ENCODE measurements at regions of chr1 and their contacts with region 1.

Region 1: DNA sequence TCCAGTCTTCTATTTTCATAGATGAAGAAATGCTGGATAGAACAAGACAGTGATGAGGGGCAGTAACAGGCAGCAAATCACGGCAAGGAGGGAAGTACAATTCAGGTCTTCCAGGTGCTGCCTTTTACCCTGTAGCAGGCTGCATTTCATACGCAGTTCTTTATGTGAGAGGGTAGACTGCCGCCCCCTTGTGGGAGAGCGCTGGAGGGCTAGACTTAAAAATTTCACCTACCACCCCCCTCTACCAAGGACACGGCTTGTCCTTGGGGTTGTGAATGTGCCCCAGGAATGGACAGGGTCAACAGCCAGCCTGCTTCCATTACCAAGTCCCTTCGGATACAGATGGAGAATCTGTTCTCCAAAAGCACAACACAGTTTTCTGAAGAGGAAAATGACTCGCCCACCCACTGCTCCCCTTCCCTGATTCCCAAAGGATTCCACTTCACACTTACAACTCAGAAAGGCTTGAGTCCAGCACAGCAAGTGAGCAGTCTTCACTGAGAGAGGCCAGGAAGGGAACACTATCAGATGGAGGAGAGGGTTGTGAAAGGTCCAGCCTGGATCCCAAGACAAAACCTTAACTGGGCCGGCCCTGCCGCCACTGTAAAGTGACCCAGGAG is 7.4 kb downstream of the WDR77 start:
- DNase-seq: peak; percentile 62 to 72 (median 64)
- H3K4me3 ChIP-seq: no peak overlapping the region
- H3K4me3 Mint-ChIP-seq: no peak overlapping the region
- H3K27ac ChIP-seq: peak overlapping the region; percentile 12
- H3K27ac Mint-ChIP-seq: peak overlapping the region; percentile 68 to 82 (median 77)
- H3K4me1 ChIP-seq: peaks cover 26% of the 10 kb centered on the region
- H3K4me1 Mint-ChIP-seq: peaks cover 16 to 44% (median 27%) of the 10 kb centered on the region in 4 donors
- H3K27me3 ChIP-seq: no peaks in the 10 kb centered on the region
- H3K27me3 Mint-ChIP-seq: no peaks in the 10 kb centered on the region

Region 2: GRCh38 chr1:111139956-111140679 is 301.6 kb before region 1 on chr1 and contains the starts of genes CEPT1 and DRAM2:
- CTCF ChIA-PET with region 1: no interaction called
- POLR2A ChIA-PET with region 1: no interaction called
- intact Hi-C with region 1: no loop called
- DNase-seq: peak; percentile 89 to 95 (median 91)
- H3K4me3 ChIP-seq: peak within 1 kb of the TSS; percentile 57 to 97
- H3K4me3 Mint-ChIP-seq: peak within 1 kb of the TSS; percentile 98 to 100 (median 100)
- H3K27ac ChIP-seq: peak within 1 kb of the TSS; percentile 79
- H3K27ac Mint-ChIP-seq: peak within 1 kb of the TSS; percentile 84 to 100 (median 99)
- H3K4me1 ChIP-seq: peaks cover 54% of the 10 kb centered on the region
- H3K4me1 Mint-ChIP-seq: peaks cover 32 to 54% (median 41%) of the 10 kb centered on the region in 4 donors
- H3K27me3 ChIP-seq: no peaks in the 10 kb centered on the region
- H3K27me3 Mint-ChIP-seq: no peaks in the 10 kb centered on the region
- total RNA-seq, gene CEPT1: 49.1 to 49.6 TPM
- total RNA-seq, gene DRAM2: 37.5 to 38.8 TPM

Region 3: GRCh38 chr1:111334169-111334568 is 107.5 kb before region 1 on chr1:
- CTCF ChIA-PET with region 1: no interaction called
- POLR2A ChIA-PET with region 1: no interaction called
- intact Hi-C with region 1: loop called (anchors 1 kb)
- DNase-seq: peak; percentile 49 to 69 (median 68)
- H3K4me3 ChIP-seq: no peak overlapping the region
- H3K4me3 Mint-ChIP-seq: peak overlapping the region in 2 of 8 donors; percentile 24 to 45
- H3K27ac ChIP-seq: no peak overlapping the region
- H3K27ac Mint-ChIP-seq: peak overlapping the region in 3 of 7 donors; percentile 1 to 74 (median 3)
- H3K4me1 ChIP-seq: peaks cover 7% of the 10 kb centered on the region
- H3K4me1 Mint-ChIP-seq: peaks cover 2 to 12% (median 4%) of the 10 kb centered on the region in 4 donors
- H3K27me3 ChIP-seq: no peaks in the 10 kb centered on the region
- H3K27me3 Mint-ChIP-seq: no peaks in the 10 kb centered on the region

Region 4: DNA sequence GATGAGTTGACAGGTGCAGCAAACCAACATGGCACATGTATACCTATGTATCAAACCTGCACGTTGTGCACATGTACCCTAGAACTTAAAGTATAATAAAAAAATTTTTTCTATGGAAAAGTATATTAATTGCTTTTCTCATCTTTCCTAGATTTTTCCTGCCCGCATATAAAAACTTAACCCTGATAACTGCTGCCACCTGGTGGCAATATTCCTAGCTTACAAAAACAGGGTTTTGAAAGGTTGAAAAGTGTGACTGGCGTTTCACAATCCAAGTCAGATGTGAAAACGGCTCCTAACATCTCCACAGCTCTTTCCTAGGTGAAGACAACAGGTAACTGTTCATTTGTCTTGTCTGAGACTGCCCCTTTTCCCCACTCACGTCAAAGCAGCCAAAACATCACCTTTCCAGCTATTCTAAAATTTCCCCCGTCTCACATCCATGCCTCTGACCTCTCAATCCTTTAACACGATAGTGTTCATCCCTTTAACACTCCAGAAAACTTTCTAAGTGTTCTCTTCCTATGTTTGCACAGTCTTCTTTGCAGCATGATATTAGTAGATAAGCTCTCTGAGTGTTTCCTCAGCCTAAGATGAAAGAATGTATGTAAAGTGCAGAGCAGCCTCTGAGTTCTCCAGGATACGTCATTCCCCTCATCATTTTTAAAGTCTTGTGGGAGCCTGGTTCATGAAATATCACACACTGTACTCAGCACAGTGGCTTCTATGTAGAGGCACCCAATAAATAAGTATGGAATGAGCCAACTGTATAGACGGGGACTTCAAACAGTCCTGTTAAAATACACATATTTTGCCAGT is 41.7 kb before region 1 on chr1:
- CTCF ChIA-PET with region 1: interaction called, 21 read pairs
- POLR2A ChIA-PET with region 1: no interaction called
- intact Hi-C with region 1: no loop called
- DNase-seq: peak in 4 of 5 donors; percentile 27 to 39 (median 33)
- H3K4me3 ChIP-seq: no peak overlapping the region
- H3K4me3 Mint-ChIP-seq: peak overlapping the region in 1 of 8 donors; percentile 18
- H3K27ac ChIP-seq: no peak overlapping the region
- H3K27ac Mint-ChIP-seq: peak overlapping the region in 4 of 7 donors; percentile 18 to 55 (median 34)
- H3K4me1 ChIP-seq: peaks cover 6% of the 10 kb centered on the region
- H3K4me1 Mint-ChIP-seq: peaks cover 7 to 18% (median 13%) of the 10 kb centered on the region in 4 donors
- H3K27me3 ChIP-seq: no peaks in the 10 kb centered on the region
- H3K27me3 Mint-ChIP-seq: no peaks in the 10 kb centered on the region

Region 5: DNA sequence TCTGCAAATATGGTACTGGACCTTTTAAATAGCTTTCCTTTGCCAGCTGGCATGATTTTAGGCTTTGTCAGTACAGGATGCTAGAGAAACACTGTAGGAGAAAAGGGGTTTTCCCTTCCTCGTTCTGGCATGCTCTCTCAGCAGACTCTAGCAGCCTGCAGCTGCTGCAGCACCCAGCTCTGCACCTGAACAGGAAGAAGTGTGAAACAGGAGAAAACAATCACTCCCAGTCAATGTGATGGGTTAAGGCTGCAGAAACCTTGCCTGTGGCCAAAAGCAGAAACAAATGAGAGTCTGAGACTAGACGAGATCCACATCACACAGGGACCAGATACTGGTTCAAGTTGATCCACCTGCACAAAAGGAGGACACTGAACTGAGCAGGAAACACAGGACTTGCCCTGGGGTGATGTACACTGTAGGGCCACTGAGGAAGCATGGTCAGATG is 35.3 kb before region 1 on chr1:
- CTCF ChIA-PET with region 1: interaction called, 21 read pairs
- POLR2A ChIA-PET with region 1: interaction called, 3 read pairs
- intact Hi-C with region 1: loop called (anchors 2 kb)
- DNase-seq: peak; percentile 53 to 71 (median 61)
- H3K4me3 ChIP-seq: no peak overlapping the region
- H3K4me3 Mint-ChIP-seq: peak overlapping the region; percentile 47 to 80 (median 68)
- H3K27ac ChIP-seq: no peak overlapping the region
- H3K27ac Mint-ChIP-seq: peak overlapping the region; percentile 43 to 93 (median 69)
- H3K4me1 ChIP-seq: peaks cover 33% of the 10 kb centered on the region
- H3K4me1 Mint-ChIP-seq: peaks cover 23 to 32% (median 29%) of the 10 kb centered on the region in 4 donors
- H3K27me3 ChIP-seq: no peaks in the 10 kb centered on the region
- H3K27me3 Mint-ChIP-seq: no peaks in the 10 kb centered on the region

Region 6: GRCh38 chr1:111488669-111489068 is 47.0 kb after region 1 on chr1:
- CTCF ChIA-PET with region 1: no interaction called
- POLR2A ChIA-PET with region 1: no interaction called
- intact Hi-C with region 1: no loop called
- DNase-seq: no peak
- H3K4me3 ChIP-seq: no peak overlapping the region
- H3K4me3 Mint-ChIP-seq: no peak overlapping the region
- H3K27ac ChIP-seq: no peak overlapping the region
- H3K27ac Mint-ChIP-seq: no peak overlapping the region
- H3K4me1 ChIP-seq: no peaks in the 10 kb centered on the region
- H3K4me1 Mint-ChIP-seq: peaks cover 0 to 6% (median 2%) of the 10 kb centered on the region in 4 donors
- H3K27me3 ChIP-seq: no peaks in the 10 kb centered on the region
- H3K27me3 Mint-ChIP-seq: no peaks in the 10 kb centered on the region

Region 7: DNA sequence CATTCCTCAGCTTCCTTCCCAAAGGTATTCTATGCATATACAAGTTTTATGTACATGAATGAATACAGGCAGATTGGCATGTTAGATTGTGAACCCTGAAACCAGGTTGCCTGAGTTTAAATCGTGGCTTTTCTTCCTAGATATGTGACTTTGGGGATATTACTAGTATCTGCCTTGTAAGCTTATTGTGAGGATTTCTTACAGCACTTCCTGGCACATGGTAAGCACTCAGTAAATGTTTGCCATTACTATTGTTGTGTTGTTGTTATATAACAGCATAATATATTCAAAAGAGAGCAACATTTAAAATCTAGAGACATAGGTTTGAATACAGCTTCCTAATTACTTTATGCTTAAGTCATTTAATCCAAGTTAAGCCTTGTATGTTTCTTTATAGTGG is 223.0 kb after region 1 on chr1:
- CTCF ChIA-PET with region 1: no interaction called
- POLR2A ChIA-PET with region 1: no interaction called
- intact Hi-C with region 1: no loop called
- DNase-seq: no peak
- H3K4me3 ChIP-seq: no peak overlapping the region
- H3K4me3 Mint-ChIP-seq: peak overlapping the region; percentile 1 to 79 (median 26)
- H3K27ac ChIP-seq: no peak overlapping the region
- H3K27ac Mint-ChIP-seq: peak overlapping the region; percentile 14 to 88 (median 73)
- H3K4me1 ChIP-seq: peaks cover 87% of the 10 kb centered on the region
- H3K4me1 Mint-ChIP-seq: peaks cover 43 to 70% (median 56%) of the 10 kb centered on the region in 4 donors
- H3K27me3 ChIP-seq: no peaks in the 10 kb centered on the region
- H3K27me3 Mint-ChIP-seq: no peaks in the 10 kb centered on the region

Region 8: DNA sequence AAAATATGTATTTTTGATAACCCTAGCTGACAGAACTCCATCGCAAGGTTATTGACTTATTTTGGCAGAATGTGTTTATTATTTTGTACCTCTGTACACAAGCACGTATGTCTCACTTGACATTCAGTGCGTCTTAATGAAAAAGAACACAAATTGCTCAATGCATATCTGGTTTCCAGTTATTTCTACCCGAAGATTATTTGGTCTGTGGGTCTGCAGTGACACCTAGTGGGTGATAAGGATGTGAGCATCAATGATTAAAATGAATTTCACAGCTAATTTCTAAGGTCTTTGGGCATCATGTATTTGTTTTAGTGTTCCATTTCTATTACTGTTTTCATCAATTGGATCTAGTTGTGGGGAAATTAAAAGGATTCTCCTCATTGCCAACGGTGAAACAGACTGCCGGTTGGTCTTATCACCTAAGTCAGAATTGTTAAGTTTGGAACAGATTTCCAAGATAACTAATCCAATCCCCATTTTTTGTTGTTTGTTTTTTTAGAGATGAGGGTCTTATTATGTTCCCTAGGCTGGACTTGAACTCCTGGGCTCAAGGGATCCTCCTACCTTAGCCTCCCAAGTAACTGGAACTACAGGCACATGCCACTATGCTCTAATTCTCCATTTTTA is 327.9 kb after region 1 on chr1:
- CTCF ChIA-PET with region 1: interaction called, 3 read pairs
- POLR2A ChIA-PET with region 1: no interaction called
- intact Hi-C with region 1: loop called (anchors 1 kb)
- DNase-seq: peak; percentile 54 to 64 (median 59)
- H3K4me3 ChIP-seq: no peak overlapping the region
- H3K4me3 Mint-ChIP-seq: no peak overlapping the region
- H3K27ac ChIP-seq: no peak overlapping the region
- H3K27ac Mint-ChIP-seq: peak overlapping the region in 5 of 7 donors; percentile 7 to 55 (median 38)
- H3K4me1 ChIP-seq: no peaks in the 10 kb centered on the region
- H3K4me1 Mint-ChIP-seq: peaks cover 0 to 3% (median under 1%) of the 10 kb centered on the region in 4 donors
- H3K27me3 ChIP-seq: no peaks in the 10 kb centered on the region
- H3K27me3 Mint-ChIP-seq: no peaks in the 10 kb centered on the region

Region 9: GRCh38 chr1:111833334-111833733 is 391.7 kb after region 1 on chr1:
- CTCF ChIA-PET with region 1: no interaction called
- POLR2A ChIA-PET with region 1: no interaction called
- intact Hi-C with region 1: no loop called
- DNase-seq: no peak
- H3K4me3 ChIP-seq: no peak overlapping the region
- H3K4me3 Mint-ChIP-seq: no peak overlapping the region
- H3K27ac ChIP-seq: no peak overlapping the region
- H3K27ac Mint-ChIP-seq: no peak overlapping the region
- H3K4me1 ChIP-seq: no peaks in the 10 kb centered on the region
- H3K4me1 Mint-ChIP-seq: no peaks in the 10 kb centered on the region
- H3K27me3 ChIP-seq: peaks cover 4% of the 10 kb centered on the region
- H3K27me3 Mint-ChIP-seq: peaks cover 22 to 32% of the 10 kb centered on the region in 2 donors

Measured in CD4-positive, alpha-beta memory T cell (primary cell).